ENCODE measurements at regions of chr17 and their contacts with region 1.

Region 1: DNA sequence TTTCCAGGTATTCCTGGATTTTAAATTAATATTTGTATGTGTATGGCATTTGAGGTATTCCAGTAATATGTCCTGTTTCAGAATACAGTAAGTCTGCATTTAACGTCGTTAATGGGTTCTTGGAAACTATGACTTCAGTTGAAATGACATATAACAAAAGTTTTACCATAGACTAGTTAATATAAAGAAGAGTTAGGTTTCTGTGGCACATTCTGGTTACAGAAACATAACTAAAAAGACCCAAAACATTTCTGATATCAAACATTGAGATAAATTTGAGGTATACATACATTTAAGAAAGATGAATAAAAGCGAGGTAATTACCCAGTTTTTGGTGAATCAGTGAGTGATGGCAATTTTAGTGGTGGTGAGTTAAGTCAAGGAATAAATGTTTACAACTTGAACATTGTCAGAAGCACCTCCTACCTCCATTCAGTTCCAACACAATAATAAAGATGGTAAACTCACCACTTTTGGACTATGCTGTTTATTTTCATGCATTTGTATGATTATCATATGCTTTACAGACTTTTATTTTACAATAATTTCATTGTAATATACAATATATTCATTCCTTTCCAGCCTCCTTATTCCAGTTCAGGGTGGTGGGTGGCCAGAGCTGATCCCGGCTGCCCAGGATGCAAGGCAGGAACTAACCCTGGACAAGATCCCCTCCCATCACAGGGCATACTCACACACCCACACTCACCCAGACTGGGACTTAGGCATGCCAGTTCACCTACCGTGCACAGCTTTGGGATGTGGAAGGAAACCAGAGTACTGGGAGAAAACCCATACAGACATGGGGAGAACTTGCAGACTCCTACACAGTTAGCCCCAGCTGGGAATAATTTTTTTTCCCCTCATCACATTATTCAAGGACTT is 9.7 kb downstream of the LUC7L3 start:
- DNase-seq: no peak
- H3K4me3 ChIP-seq: no peak overlapping the region
- H3K27ac ChIP-seq: no peak overlapping the region
- H3K4me1 ChIP-seq: peaks cover 5% of the 10 kb centered on the region
- H3K27me3 ChIP-seq: no peaks in the 10 kb centered on the region
- CTCF ChIP-seq: no peak

Region 2: DNA sequence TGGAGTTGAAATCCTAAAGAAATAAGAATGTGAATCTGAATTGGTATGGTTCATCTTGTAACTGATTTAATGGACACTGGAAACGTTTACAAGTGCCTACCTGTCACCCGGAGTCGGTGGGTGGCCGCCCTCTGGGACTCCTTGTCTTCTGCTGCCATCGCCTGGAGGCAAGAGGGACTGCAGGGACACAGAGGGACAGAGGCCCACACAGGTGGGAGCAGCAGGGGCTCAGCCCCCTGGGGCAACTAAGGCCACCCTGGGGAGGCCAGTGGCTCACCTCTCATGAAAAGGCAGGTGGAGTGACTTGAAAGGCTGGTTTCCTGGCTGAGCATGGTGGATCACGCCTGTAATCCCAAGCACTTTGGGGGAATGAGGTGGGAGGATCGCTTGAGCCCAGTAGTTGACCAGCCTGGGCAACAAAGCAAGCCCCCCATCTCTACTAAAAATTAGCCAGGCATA is 431.7 kb before region 1 on chr17:
- CTCF ChIA-PET with region 1: no interaction called
- dilution Hi-C with region 1: no loop called
- in situ Hi-C with region 1: no loop called
- intact Hi-C with region 1: no loop called
- DNase-seq: no peak
- H3K4me3 ChIP-seq: no peak overlapping the region
- H3K27ac ChIP-seq: no peak overlapping the region
- H3K4me1 ChIP-seq: no peaks in the 10 kb centered on the region
- H3K27me3 ChIP-seq: no peaks in the 10 kb centered on the region
- CTCF ChIP-seq: peak; percentile 82 to 93

Region 3: GRCh38 chr17:50668025-50668837 is 60.9 kb before region 1 on chr17:
- CTCF ChIA-PET with region 1: no interaction called
- dilution Hi-C with region 1: no loop called
- in situ Hi-C with region 1: no loop called
- intact Hi-C with region 1: no loop called
- DNase-seq: no peak
- H3K4me3 ChIP-seq: no peak overlapping the region
- H3K27ac ChIP-seq: no peak overlapping the region
- H3K4me1 ChIP-seq: peaks cover 34% of the 10 kb centered on the region
- H3K27me3 ChIP-seq: no peaks in the 10 kb centered on the region
- CTCF ChIP-seq: no peak

Region 4: GRCh38 chr17:50771991-50772785 is 43.1 kb after region 1 on chr17:
- CTCF ChIA-PET with region 1: no interaction called
- dilution Hi-C with region 1: no loop called
- in situ Hi-C with region 1: no loop called
- intact Hi-C with region 1: no loop called
- DNase-seq: no peak
- H3K4me3 ChIP-seq: no peak overlapping the region
- H3K27ac ChIP-seq: no peak overlapping the region
- H3K4me1 ChIP-seq: peaks cover 2% of the 10 kb centered on the region
- H3K27me3 ChIP-seq: no peaks in the 10 kb centered on the region
- CTCF ChIP-seq: no peak

Region 5: GRCh38 chr17:50790618-50791017 is 61.5 kb after region 1 on chr17:
- CTCF ChIA-PET with region 1: no interaction called
- dilution Hi-C with region 1: loop called (anchors 5 kb)
- in situ Hi-C with region 1: no loop called
- intact Hi-C with region 1: no loop called
- DNase-seq: no peak
- H3K4me3 ChIP-seq: no peak overlapping the region
- H3K27ac ChIP-seq: no peak overlapping the region
- H3K4me1 ChIP-seq: peaks cover 19% of the 10 kb centered on the region
- H3K27me3 ChIP-seq: no peaks in the 10 kb centered on the region
- CTCF ChIP-seq: no peak

Measured in mammary epithelial cell (primary cell).